ENCODE measurements at regions of chr11 and their contacts with region 1.

Region 1: GRCh38 chr11:33987975-33988580 is 63.5 kb upstream of the CAPRIN1 start:
- DNase-seq: peak in 9 of 10 donors; percentile 34 to 95 (median 74)

Region 2: GRCh38 chr11:33835143-33835878 is 152.8 kb before region 1 on chr11:
- intact Hi-C with region 1: loop called (anchors 1 kb)
- DNase-seq: no peak

Region 3: DNA sequence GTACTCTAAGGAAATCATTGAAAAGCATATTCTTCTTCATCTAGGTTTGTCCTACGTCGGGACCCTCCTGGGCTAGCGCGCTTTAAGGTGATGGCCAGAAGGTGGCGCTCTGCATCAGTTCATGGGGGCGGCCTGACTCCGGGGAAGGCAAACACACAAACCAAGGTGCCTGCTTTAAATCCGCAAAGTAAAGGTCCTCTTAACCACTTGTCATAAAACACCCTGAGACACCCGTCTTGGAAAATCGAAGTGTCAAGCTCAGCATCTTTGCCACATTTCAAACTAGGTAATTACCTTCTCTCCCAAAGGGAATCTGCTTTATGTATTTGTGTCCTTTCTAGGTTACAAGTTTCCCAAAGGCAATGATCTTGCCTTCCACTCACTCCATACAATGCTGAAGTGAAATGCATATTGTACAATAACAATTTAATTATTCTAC is 130.1 kb before region 1 on chr11:
- intact Hi-C with region 1: loop called (anchors 2 kb)
- DNase-seq: peak; percentile 43 to 95 (median 75)

Measured in posterior cingulate gyrus (tissue), 11 donors.